ENCODE measurements at regions of chr2 and their contacts with region 1.

Region 1: DNA sequence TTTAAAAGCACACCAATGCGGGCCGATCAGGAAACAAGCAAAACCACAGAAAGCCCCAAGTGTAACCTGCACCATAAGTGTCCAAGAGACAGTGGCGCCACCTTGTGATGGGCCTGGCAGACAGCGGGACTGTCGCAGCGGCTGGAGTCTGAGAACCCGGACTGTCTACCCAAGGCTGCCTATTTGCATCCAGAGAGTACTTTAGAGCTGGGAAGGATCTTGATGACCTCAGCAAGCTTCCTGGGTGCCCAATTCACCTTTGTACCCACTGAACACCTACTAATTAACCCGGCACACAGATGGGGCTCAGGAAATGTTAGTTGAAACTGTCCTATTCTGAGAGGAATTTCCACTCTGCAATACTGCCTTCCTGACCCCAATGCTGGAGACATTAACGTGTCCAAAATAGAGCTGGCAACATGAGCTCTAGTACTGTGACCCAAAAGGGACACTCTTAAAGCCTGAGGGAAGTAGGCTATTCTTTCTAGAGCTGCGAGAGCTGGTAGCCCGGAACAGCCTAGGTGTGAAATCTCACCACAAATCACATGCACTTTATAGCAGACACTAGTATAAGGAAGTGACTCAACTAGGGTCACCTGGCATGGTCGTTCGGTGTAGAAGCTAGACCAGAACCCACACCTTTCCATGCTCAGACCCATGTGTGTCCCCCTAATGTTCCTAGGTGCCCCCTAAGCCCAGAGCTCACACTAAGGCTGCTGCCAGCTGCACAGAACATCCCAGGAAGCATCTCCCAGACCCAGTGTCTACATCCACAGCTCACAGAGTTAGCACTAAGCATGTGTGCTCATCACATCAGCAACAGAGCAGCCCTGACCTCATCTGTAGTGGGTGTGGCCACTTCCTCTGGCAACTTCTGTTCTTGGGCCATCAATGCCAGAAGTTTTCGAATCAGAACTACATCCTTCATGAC is 25.4 kb downstream of the POLR1A start:
- DNase-seq: peak; percentile 40 to 92 (median 79)
- ATAC-seq: peak; percentile 92
- H3K4me3 ChIP-seq: no peak overlapping the region
- H3K27ac ChIP-seq: peak overlapping the region in 1 of 2 donors; percentile 5
- H3K4me1 ChIP-seq: peaks cover 0 to 16% of the 10 kb centered on the region in 2 donors
- H3K27me3 ChIP-seq: no peaks in the 10 kb centered on the region
- CTCF ChIP-seq: peak; percentile 62 to 78

Region 2: GRCh38 chr2:85750587-85751575 is 329.4 kb before region 1 on chr2:
- intact Hi-C with region 1: no loop called
- DNase-seq: peak in 3 of 4 donors; percentile 71 to 79 (median 73)
- ATAC-seq: peak; percentile 71
- H3K4me3 ChIP-seq: no peak overlapping the region
- H3K27ac ChIP-seq: no peak overlapping the region
- H3K4me1 ChIP-seq: peaks cover 7 to 71% of the 10 kb centered on the region in 2 donors
- H3K27me3 ChIP-seq: peaks cover 0 to 54% of the 10 kb centered on the region in 2 donors
- CTCF ChIP-seq: peak; percentile 81 to 87

Region 3: GRCh38 chr2:85826990-85827878 is 253.0 kb before region 1 on chr2:
- intact Hi-C with region 1: loop called in 1 of 2 experiments (anchors 5 kb)
- DNase-seq: peak in 3 of 4 donors; percentile 67 to 91 (median 69)
- ATAC-seq: peak; percentile 99
- H3K4me3 ChIP-seq: no peak overlapping the region
- H3K27ac ChIP-seq: no peak overlapping the region
- H3K4me1 ChIP-seq: peaks cover 0 to 6% of the 10 kb centered on the region in 2 donors
- H3K27me3 ChIP-seq: no peaks in the 10 kb centered on the region
- CTCF ChIP-seq: peak; percentile 87 to 92

Region 4: GRCh38 chr2:86319700-86320580 is 239.7 kb after region 1 on chr2:
- intact Hi-C with region 1: no loop called
- DNase-seq: no peak
- ATAC-seq: no peak
- H3K4me3 ChIP-seq: no peak overlapping the region
- H3K27ac ChIP-seq: no peak overlapping the region
- H3K4me1 ChIP-seq: no peaks in the 10 kb centered on the region
- H3K27me3 ChIP-seq: no peaks in the 10 kb centered on the region
- CTCF ChIP-seq: no peak

Region 5: DNA sequence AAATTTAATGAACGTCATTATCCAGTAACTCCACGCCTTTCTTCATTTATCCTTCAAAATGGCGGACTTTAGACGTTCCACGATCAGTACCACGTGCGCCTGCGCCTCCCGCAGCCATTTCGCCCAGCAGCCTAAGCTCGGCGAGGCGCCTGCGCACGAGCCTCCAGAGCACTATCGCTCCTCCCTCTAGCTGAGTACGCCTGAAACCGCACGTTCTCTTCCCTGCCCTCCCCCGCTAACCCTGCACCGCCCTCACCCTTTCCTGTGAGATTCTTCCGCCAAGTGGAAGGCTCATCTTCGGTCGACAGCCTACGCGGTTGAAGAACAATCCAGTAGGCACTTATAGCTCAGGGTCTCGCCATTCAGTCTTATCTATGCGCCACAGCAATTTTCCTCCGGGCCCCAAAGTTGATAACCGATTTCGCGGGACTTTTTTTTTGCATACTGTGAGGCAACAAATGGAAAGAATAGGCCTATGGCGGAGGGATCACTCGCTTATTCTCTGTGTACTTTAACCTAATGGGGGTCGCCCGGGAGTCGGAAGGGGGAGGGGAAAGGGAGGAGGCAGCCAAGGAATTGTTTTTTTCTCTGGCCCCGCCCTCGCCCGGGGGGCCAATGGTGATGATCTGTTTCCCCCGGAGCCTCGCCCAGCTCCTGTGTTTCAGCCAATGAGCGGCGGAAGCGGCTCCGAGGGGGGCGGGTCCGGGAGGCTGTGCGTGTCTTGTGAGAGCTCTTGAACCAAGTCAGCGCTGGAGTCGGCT is 360.6 kb after region 1 on chr2 and contains the start of gene KDM3A:
- intact Hi-C with region 1: no loop called
- DNase-seq: peak; percentile 99
- ATAC-seq: peak; percentile 92
- H3K4me3 ChIP-seq: peak within 1 kb of the TSS; percentile 61 to 73
- H3K27ac ChIP-seq: peak within 1 kb of the TSS; percentile 97
- H3K4me1 ChIP-seq: peaks cover 13 to 31% of the 10 kb centered on the region in 2 donors
- H3K27me3 ChIP-seq: no peaks in the 10 kb centered on the region
- CTCF ChIP-seq: no peak
- polyA plus RNA-seq, gene KDM3A: 70.9 to 115 (median 82.1) TPM

Measured in left lung (tissue), 14 donors.